ENCODE measurements at regions of chr19 and their contacts with region 1.

Region 1: DNA sequence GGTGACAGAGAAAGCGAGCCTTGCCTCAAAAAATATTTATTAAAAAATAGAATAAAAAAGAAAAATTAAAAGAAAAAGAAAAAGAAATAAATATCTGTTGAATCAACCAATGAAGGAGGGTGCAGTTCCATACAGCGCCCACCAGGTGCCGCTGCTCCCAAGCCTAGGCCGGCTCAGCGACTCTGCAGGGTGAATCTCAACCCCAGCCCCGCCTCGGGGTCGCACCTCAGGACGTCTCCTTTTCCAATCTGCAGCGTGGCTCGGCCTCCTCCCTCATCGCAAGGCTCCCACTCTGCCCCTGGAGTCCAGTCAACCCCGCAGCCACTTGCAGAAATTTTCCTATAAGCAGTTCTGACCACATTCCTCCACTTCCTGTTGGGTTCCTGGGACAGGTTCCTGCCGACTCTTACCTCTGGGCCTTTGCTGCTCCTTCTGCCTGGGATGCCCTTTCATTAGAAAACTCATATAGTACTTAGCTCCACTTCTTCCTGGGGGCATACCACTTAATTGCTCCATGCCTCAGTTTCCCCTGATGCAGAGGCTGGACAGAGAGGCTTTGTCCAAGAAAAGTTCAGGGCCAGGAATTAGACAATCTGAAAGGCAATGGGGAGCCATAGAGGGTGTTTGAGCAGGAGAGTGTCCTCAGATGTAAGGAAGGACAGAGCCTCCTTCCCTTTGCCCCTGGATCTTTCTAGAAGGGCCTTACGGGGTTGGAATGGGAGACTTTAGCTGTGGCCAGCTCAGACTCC is 24.3 kb downstream of the NFILZ start:
- DNase-seq: peak; percentile 13 to 87
- H3K4me3 ChIP-seq: peak overlapping the region in 1 of 4 experiments; percentile 44; a peak in 2 of 8 replicates
- H3K27ac ChIP-seq: no peak overlapping the region
- H3K4me1 ChIP-seq: peaks cover 0 to 6% (median 0%) of the 10 kb centered on the region in 4 experiments; a peak in 1 of 7 replicates
- H3K27me3 ChIP-seq: peaks cover 0 to 2% (median 0%) of the 10 kb centered on the region in 4 experiments; a peak in 1 of 7 replicates
- CTCF ChIP-seq: peak; percentile 81 to 86 (median 83)
- EP300 ChIP-seq: no peak
- POLR2A ChIP-seq: no peak
- RAD21 ChIP-seq: peak; percentile 93 to 95

Region 2: DNA sequence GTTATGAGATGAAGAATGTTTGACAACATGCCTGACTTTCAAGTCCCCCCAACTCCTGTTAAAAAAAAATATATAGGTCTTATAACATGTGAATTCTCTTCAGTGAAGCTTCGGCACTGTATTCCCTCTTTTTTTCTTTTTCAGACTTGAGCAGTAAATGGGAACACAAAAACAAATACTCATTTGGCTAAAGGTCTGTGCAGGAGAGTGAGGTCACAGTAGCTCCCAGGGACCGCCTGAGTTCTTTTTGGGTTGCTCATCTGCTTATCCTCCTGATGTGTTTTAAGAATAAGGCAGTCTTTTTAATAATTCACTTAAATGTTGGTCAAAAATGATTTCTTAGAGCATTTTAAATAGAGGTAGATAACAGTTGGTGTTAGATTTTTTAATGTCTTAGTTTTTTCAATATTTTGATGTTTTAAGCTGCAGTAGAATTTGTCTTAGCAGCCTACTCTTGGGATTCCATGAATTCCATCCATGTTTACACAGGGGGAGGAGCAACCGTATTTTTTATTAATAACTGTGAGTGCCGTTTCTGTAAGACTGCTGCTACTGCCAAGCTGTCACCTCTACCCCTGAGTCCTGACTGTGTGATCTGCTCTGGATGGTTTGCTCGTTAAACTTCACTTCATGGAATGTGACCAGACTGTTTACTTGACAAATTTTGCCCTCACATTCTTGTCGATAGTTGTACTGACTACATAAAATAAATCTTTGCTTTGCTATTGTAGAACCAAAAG is 195.1 kb before region 1 on chr19:
- CTCF ChIA-PET with region 1: no interaction called
- POLR2A ChIA-PET with region 1: no interaction called
- DNase-seq: no peak
- H3K4me3 ChIP-seq: no peak overlapping the region
- H3K27ac ChIP-seq: no peak overlapping the region
- H3K4me1 ChIP-seq: peaks cover 8 to 14% (median 12%) of the 10 kb centered on the region in 4 experiments
- H3K27me3 ChIP-seq: no peaks in the 10 kb centered on the region
- CTCF ChIP-seq: no peak
- EP300 ChIP-seq: no peak
- POLR2A ChIP-seq: no peak
- RAD21 ChIP-seq: no peak

Region 3: DNA sequence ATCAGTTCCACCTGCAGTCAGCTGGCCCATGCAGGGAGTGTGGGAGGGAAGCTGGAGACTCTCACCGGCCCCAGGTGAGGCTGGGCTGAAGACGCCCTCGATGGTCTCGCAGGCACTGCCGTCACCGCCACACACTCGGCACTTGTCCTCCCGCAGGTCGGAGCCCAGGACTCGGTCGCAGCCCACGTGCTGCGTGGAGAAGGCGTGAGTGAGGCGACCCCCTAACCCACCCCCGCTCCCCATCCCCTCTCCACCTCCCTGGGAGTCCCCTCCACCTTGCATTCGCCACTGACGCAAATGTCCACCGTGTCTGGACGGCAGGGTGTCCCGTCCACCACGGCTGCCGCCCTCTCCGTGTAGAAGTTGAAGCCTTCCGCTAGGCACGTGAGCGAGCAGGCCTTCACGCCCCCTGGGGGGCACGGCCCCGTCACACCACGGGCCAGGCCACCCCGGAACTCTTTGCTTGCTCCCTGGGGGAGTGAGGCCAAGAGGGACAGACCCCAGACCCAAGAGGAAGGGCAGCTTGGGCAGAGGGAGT is 65.5 kb before region 1 on chr19:
- CTCF ChIA-PET with region 1: no interaction called
- POLR2A ChIA-PET with region 1: no interaction called
- DNase-seq: no peak
- H3K4me3 ChIP-seq: no peak overlapping the region
- H3K27ac ChIP-seq: no peak overlapping the region
- H3K4me1 ChIP-seq: peaks cover 0 to 5% (median under 1%) of the 10 kb centered on the region in 4 experiments; a peak in 4 of 7 replicates
- H3K27me3 ChIP-seq: peaks cover 0 to 3% (median 1%) of the 10 kb centered on the region in 4 experiments; a peak in 3 of 7 replicates
- CTCF ChIP-seq: no peak
- EP300 ChIP-seq: no peak
- POLR2A ChIP-seq: no peak
- RAD21 ChIP-seq: no peak

Region 4: GRCh38 chr19:8641908-8642547 is 12.7 kb before region 1 on chr19:
- CTCF ChIA-PET with region 1: interaction called, 24 read pairs
- POLR2A ChIA-PET with region 1: no interaction called
- DNase-seq: no peak
- H3K4me3 ChIP-seq: no peak overlapping the region
- H3K27ac ChIP-seq: no peak overlapping the region
- H3K4me1 ChIP-seq: no peaks in the 10 kb centered on the region
- H3K27me3 ChIP-seq: peaks cover 0 to 13% (median 8%) of the 10 kb centered on the region in 4 experiments; a peak in 3 of 7 replicates
- CTCF ChIP-seq: peak in 2 of 3 experiments; percentile 59 to 65; a peak in 3 of 4 replicates
- EP300 ChIP-seq: no peak
- POLR2A ChIP-seq: no peak
- RAD21 ChIP-seq: peak; percentile 59 to 66

Region 5: DNA sequence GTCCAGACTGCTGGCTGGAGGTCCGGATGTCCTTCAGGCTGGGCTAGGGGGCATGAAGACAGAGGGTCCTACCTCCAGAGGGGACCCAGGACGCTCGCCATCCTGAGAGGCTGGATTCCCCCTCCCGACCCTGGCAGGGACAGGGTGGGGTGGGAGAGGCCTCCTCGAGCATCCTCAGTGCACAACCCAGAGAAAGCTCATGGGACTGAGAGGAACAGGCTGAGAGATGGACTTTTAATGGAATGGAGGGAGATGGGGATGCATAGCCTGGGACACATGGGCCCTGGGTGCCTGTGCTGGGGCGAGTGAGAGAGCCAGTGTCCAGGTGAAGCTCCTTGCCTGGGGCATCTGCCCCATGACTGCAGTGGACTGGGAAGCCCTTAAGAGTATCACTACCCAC is 40.7 kb after region 1 on chr19:
- CTCF ChIA-PET with region 1: interaction called, 41 read pairs
- POLR2A ChIA-PET with region 1: no interaction called
- DNase-seq: no peak
- H3K4me3 ChIP-seq: no peak overlapping the region
- H3K27ac ChIP-seq: no peak overlapping the region
- H3K4me1 ChIP-seq: no peaks in the 10 kb centered on the region
- H3K27me3 ChIP-seq: no peaks in the 10 kb centered on the region; a peak in 1 of 7 replicates
- CTCF ChIP-seq: no peak
- EP300 ChIP-seq: no peak
- POLR2A ChIP-seq: no peak
- RAD21 ChIP-seq: no peak